GM13977 (cell line): ENCODE measurements at regions of chr17 and their contacts with region 1.

Region 1: DNA sequence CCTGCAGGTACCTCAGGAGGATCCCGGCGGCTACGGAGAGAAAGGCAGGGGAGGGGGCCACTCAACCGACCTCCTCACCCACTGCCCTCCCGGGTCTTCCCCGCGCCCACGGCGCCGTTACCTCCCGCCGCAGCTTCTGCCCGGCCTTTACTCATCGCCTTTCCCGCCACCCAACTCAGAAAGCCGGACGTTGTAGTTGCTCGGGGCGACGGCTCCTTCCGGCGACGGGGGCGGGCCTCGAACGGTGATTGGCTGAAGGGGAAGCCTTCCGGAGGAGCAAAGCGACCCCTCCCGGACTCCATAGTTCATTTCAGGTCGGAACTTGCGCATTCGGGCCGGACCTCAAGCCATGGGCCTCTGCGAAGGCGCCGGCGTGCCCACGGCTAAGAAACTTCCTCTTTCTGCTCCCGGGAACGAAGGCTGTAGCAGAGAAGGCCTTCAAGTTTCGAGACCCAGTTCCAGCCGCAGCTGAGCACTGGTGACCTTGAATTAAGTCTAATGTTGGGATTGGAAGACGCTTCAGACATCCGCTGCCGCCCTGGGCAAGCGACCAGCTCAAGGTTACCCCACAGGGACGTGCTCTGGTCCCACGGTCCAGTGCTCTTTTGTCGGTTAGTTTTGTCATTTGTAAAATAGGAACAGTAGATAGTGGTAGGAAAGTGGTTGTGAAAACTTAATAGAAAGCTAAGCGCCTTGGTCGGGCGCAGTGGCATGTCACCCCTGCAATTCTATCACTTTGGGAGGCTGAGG is at the start of gene PSMC3IP:
- DNase-seq: peak; percentile 95
- CTCF ChIP-seq: peak; percentile 47

Region 2: GRCh38 chr17:42679492-42680330 is 102.0 kb after region 1 on chr17:
- in situ Hi-C with region 1: loop called (anchors 10 kb)
- DNase-seq: peak; percentile 89
- CTCF ChIP-seq: peak; percentile 92

Region 3: GRCh38 chr17:42760652-42761581 is 183.2 kb after region 1 on chr17 and contains the start of gene RAMP2:
- in situ Hi-C with region 1: loop called (anchors 10 kb)
- DNase-seq: peak; percentile 38
- CTCF ChIP-seq: no peak